ENCODE measurements at regions of chr16 and their contacts with region 1.

Region 1: DNA sequence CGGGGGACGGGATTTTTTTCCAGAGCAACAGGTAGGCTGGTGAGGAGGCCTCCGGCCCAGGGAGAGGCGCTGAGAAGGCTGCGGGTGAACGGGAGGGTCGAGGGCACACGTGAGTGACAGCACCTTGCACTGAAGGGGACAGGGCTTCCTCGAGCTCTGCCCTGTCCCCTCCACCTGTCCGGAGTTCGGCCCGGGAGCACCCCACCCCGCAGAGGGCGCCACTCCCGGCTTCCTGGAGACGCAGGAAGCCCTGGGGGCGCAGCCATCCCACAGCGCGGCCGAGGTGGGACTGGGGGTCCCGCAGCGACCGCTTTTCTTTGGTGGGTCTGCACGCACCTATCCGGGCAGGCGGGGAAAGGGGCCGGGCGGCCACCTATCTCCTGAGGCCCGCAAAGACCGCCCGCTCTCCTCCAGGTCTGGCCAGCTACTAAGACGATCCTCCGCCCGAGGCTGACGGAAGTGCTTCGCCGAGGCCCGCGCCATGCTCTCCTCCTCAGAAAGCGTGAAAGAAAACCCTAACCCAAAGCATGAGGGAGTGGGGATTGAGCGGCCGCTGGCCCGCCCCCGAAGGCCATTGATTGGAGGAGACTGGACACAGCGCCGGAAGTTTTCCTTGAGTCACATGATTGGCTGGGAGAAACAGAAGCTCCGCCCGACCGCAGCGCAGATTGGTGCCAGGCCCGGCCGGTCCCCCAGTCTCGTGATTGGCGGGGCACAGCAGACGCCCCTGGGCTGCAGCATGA is 34.3 kb downstream of the DDX19A start:
- DNase-seq: peak; percentile 98
- H3K4me3 Mint-ChIP-seq: peak overlapping the region; percentile 98
- H3K27ac Mint-ChIP-seq: peak overlapping the region; percentile 94
- H3K4me1 Mint-ChIP-seq: peaks cover 15% of the 10 kb centered on the region
- H3K27me3 Mint-ChIP-seq: no peaks in the 10 kb centered on the region

Region 2: DNA sequence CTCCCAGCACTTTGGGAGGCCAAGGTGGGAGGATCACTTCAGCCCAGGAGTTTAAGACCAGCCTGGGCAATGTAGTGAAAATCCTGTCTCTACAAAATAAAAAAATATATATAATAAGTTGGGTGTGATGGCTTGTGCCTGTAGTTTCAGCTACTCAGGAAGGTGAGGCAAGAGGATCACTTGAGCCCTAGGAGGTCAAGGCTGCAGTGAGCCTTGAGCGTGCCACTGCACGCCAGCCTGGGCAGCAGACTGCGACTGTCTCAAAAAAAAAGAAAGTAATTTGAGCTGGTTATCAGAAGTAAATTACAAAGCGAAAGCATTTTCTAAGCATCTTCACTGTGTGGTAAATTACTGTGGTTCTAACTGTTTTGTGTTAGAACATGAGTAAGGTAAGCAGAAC is 720.9 kb before region 1 on chr16:
- CTCF ChIA-PET with region 1: no interaction called
- intact Hi-C with region 1: no loop called
- DNase-seq: no peak
- H3K4me3 Mint-ChIP-seq: no peak overlapping the region
- H3K27ac Mint-ChIP-seq: no peak overlapping the region
- H3K4me1 Mint-ChIP-seq: no peaks in the 10 kb centered on the region
- H3K27me3 Mint-ChIP-seq: no peaks in the 10 kb centered on the region

Region 3: DNA sequence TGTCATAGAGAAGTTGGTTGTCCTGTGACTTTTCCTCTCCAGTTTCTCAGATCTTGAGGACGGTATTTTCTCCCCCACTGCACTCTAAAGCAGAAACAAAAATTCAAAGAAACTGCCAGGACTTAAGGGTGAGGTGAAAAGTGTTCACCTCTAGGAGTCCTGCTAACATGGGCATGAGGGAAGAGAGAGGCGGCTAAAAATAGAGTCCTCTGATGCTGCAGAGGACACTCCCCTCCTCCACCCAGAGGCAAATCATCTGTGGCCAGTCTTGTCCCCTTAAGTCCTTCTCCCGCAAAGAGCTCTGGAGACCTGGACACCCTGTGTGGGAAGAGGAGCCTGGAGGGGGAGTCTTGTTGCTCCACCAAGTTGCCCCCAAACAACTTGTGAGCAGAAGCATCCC is 39.0 kb before region 1 on chr16:
- CTCF ChIA-PET with region 1: interaction called, 3 read pairs
- intact Hi-C with region 1: loop called (anchors 1 kb)
- DNase-seq: no peak
- H3K4me3 Mint-ChIP-seq: no peak overlapping the region
- H3K27ac Mint-ChIP-seq: no peak overlapping the region
- H3K4me1 Mint-ChIP-seq: peaks cover 8% of the 10 kb centered on the region
- H3K27me3 Mint-ChIP-seq: no peaks in the 10 kb centered on the region

Region 4: GRCh38 chr16:70428178-70428998 is 47.4 kb after region 1 on chr16:
- CTCF ChIA-PET with region 1: no interaction called
- intact Hi-C with region 1: loop called (anchors 2 kb)
- DNase-seq: peak; percentile 82
- H3K4me3 Mint-ChIP-seq: no peak overlapping the region
- H3K27ac Mint-ChIP-seq: peak overlapping the region; percentile 62
- H3K4me1 Mint-ChIP-seq: peaks cover 60% of the 10 kb centered on the region
- H3K27me3 Mint-ChIP-seq: no peaks in the 10 kb centered on the region

Region 5: DNA sequence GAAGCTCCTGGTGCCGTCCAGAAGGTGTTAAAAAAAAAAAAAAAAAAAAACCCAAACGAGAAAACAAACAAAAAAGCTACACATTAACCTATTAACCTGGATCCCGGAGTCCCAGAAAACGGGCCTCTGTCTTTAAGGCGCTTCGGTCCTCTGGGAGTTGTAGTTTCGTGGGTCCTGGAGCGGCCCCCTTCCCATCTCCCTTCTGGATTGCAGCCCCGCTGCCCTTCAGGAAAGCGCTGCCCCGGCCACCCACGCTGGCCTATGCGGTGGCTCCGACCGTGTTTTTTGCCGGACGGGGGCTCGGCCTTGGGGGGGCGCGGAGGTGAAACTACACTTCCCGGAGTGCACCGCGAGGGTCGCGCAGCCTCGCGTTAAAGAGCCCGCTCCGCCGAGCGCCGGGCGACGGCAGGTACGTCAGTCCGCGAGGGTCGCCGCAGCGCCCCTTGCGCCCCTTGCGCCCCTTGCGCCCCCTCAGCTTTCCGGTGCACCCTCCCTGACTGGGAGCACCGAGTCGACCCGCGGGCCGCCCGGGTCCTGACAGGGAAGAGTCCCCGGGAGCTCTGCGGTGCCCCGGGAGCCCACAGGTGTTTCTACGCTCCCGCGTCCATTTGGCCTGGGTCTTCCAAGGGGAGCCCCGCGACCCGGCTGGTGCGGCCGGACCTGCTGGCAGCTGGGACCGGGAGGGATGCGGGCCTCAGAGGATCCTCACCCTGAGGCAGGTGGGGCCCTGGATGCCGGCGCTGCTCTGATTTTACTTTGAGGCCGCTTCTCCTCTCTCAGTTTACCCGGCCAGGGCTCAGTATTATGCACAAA is 73.4 kb after region 1 on chr16 and contains the start of gene FCSK:
- CTCF ChIA-PET with region 1: interaction called, 5 read pairs
- intact Hi-C with region 1: loop called (anchors 1 kb)
- DNase-seq: peak; percentile 62
- H3K4me3 Mint-ChIP-seq: peak within 1 kb of the TSS; percentile 86
- H3K27ac Mint-ChIP-seq: peak within 1 kb of the TSS; percentile 88
- H3K4me1 Mint-ChIP-seq: peaks cover 18% of the 10 kb centered on the region
- H3K27me3 Mint-ChIP-seq: no peaks in the 10 kb centered on the region
- total RNA-seq, gene FCSK: 12.2 to 12.6 TPM

Region 6: DNA sequence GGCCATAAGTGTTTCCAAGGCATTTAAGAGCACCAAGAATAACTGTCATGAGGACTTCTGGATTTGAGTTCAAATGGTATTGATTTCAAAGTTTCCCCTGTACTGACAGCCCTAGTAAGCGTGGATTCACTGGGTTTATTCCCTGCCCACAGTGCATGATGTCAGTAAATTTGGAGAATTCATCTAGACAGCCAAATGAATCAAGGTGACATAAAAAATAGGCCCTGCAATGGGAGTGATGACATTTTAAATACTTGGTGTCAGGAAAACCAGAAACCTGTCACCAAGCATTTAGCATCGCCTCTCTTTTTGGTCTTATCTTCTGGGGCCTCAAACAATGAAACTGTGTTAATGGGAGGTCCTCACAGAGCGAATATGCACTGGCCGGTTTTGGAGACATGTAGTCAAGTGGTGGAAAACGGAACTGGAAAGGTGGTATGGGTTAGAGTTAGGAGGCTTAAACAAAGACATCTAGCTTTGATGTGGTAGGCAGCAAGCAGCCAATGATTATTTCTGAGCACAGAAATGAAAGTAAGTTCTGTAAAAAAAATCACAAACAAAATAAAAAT is 113.3 kb after region 1 on chr16:
- CTCF ChIA-PET with region 1: no interaction called
- intact Hi-C with region 1: no loop called
- DNase-seq: no peak
- H3K4me3 Mint-ChIP-seq: no peak overlapping the region
- H3K27ac Mint-ChIP-seq: peak overlapping the region; percentile 1
- H3K4me1 Mint-ChIP-seq: peaks cover 8% of the 10 kb centered on the region
- H3K27me3 Mint-ChIP-seq: no peaks in the 10 kb centered on the region

Region 7: GRCh38 chr16:70653809-70654771 is 273.1 kb after region 1 on chr16:
- CTCF ChIA-PET with region 1: interaction called, 5 read pairs
- intact Hi-C with region 1: loop called (anchors 5 kb)
- DNase-seq: peak; percentile 93
- H3K4me3 Mint-ChIP-seq: no peak overlapping the region
- H3K27ac Mint-ChIP-seq: no peak overlapping the region
- H3K4me1 Mint-ChIP-seq: peaks cover 5% of the 10 kb centered on the region
- H3K27me3 Mint-ChIP-seq: no peaks in the 10 kb centered on the region

Measured in activated naive CD4-positive, alpha-beta T cell treated with anti-CD3 and anti-CD28 coated beads for 36 hours (primary cell).